Caco-2 (cell line): ENCODE measurements at regions of chr3 and their contacts with region 1.

Region 1: DNA sequence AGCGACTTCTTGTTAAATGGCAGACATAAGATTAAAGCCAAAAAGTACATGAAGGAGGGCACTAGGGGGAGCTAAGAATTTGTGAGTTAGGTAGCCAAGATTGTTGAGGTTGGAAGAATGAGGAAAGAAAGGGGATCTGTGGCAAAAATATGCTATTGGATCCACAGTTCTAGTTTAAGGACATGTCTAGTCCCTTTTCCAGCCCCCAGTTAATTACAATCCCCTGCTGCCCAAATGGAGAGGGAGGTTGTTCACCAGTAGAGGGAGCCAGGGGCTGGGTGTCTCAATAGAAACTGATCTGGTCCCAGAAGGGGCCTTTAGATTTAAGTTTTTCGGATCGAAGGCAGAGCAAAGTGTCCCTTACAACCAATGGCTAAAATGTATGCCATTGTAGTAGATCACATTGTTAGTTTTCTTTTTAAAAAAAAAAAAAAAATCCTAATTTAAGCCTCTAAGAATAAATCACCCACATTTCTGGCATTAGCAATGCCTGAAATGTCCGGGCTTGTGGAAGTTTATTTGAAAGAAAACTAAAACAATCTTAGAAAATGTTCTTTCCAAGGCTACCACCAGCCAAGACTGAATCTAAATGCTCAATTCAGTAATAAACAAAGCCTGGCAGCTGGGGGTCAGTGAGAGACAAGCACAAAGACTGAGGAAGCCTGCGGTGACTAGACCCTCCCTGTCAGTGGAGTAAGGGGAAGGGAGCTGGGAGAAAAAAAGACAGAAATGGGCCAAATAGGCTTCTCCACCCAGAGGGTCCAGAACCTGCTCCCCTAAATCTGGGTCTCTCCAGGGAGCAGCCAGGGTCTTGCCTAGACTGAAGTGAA is 7.1 kb downstream of the COL8A1 start:
- DNase-seq: peak in 1 of 2 experiments; percentile 32
- H3K4me3 ChIP-seq: no peak overlapping the region
- H3K4me3 Mint-ChIP-seq: no peak overlapping the region
- H3K27ac Mint-ChIP-seq: no peak overlapping the region
- H3K4me1 ChIP-seq: peaks cover 14% of the 10 kb centered on the region; the same call in 1 of the 2 replicates
- H3K4me1 Mint-ChIP-seq: peaks cover 10% of the 10 kb centered on the region
- H3K27me3 ChIP-seq: no peaks in the 10 kb centered on the region; the same call in 1 of the 2 replicates
- H3K27me3 Mint-ChIP-seq: peaks cover 13% of the 10 kb centered on the region
- CTCF ChIP-seq: peak; percentile 46 to 56

Region 2: GRCh38 chr3:98827221-98827920 is 818.1 kb before region 1 on chr3:
- CTCF ChIA-PET with region 1: no interaction called
- POLR2A ChIA-PET with region 1: no interaction called
- intact Hi-C with region 1: no loop called
- DNase-seq: peak; percentile 9 to 30
- H3K4me3 ChIP-seq: no peak overlapping the region
- H3K4me3 Mint-ChIP-seq: no peak overlapping the region
- H3K27ac Mint-ChIP-seq: peak overlapping the region; percentile 29
- H3K4me1 ChIP-seq: peaks cover 17% of the 10 kb centered on the region
- H3K4me1 Mint-ChIP-seq: peaks cover 11% of the 10 kb centered on the region
- H3K27me3 ChIP-seq: no peaks in the 10 kb centered on the region
- H3K27me3 Mint-ChIP-seq: no peaks in the 10 kb centered on the region
- CTCF ChIP-seq: no peak

Region 3: GRCh38 chr3:99499235-99500158 is 146.0 kb before region 1 on chr3:
- CTCF ChIA-PET with region 1: no interaction called
- POLR2A ChIA-PET with region 1: no interaction called
- intact Hi-C with region 1: no loop called
- DNase-seq: peak in 1 of 2 experiments; percentile 50
- H3K4me3 ChIP-seq: no peak overlapping the region
- H3K4me3 Mint-ChIP-seq: no peak overlapping the region
- H3K27ac Mint-ChIP-seq: no peak overlapping the region
- H3K4me1 ChIP-seq: no peaks in the 10 kb centered on the region
- H3K4me1 Mint-ChIP-seq: no peaks in the 10 kb centered on the region
- H3K27me3 ChIP-seq: no peaks in the 10 kb centered on the region
- H3K27me3 Mint-ChIP-seq: no peaks in the 10 kb centered on the region
- CTCF ChIP-seq: peak; percentile 51 to 86

Region 4: DNA sequence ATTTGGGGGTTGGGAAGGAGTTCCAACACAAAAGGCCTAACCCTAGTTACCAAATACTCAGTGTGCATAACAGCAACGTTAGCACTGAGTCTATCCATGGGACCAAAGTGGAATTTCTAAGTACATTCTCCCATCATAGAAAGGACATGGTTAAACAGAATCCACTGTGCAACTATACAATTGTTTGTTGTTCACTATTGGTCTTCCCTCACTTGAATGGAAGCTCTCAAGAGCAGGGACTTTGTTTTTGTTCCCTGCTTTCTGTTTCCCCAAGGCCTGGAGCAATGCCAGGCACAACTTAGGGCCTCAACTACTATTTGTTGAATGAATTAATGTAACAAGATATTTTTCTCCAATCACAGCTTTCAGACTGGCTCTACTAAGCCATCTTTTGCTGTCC is 18.5 kb after region 1 on chr3:
- CTCF ChIA-PET with region 1: no interaction called
- POLR2A ChIA-PET with region 1: no interaction called
- intact Hi-C with region 1: no loop called
- DNase-seq: no peak
- H3K4me3 ChIP-seq: no peak overlapping the region
- H3K4me3 Mint-ChIP-seq: no peak overlapping the region
- H3K27ac Mint-ChIP-seq: no peak overlapping the region
- H3K4me1 ChIP-seq: no peaks in the 10 kb centered on the region
- H3K4me1 Mint-ChIP-seq: no peaks in the 10 kb centered on the region
- H3K27me3 ChIP-seq: no peaks in the 10 kb centered on the region; the same call in 1 of the 2 replicates
- H3K27me3 Mint-ChIP-seq: peaks cover 4% of the 10 kb centered on the region
- CTCF ChIP-seq: no peak

Region 5: DNA sequence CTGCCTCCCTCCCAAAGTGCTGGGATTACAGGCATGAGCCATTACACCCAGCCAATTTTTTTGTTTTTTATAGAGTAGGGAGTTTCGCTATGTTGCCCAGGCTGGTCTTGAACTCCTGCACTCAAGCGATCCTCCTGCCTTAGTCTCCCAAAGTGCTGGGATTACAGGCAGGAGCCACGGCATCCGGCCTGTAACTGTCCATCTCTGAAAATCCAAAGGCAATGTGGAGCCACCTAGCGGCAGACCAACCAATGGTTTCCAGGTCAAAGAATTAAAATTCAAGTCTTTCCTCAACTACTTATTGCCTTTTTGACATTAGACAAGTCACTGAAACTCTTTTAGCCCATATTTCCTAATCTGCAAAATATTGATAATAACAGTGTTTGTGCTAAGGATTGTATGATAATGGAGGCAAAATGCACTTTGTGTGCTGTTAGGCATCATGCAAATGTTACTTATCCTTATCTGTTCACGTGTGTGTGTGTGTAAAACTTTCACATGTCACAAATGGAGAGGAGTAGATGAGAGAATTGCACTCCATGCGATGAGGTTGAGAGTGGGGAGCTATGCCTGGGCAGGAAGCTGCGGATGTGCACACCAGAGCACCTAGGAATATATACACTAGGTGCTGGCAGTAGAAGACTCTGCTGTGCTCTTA is 41.6 kb after region 1 on chr3:
- CTCF ChIA-PET with region 1: interaction called, 3 read pairs
- POLR2A ChIA-PET with region 1: no interaction called
- intact Hi-C with region 1: loop called (anchors 1 kb)
- DNase-seq: peak; percentile 56 to 65
- H3K4me3 ChIP-seq: no peak overlapping the region
- H3K4me3 Mint-ChIP-seq: no peak overlapping the region
- H3K27ac Mint-ChIP-seq: no peak overlapping the region
- H3K4me1 ChIP-seq: no peaks in the 10 kb centered on the region
- H3K4me1 Mint-ChIP-seq: no peaks in the 10 kb centered on the region
- H3K27me3 ChIP-seq: no peaks in the 10 kb centered on the region; the same call in 1 of the 2 replicates
- H3K27me3 Mint-ChIP-seq: peaks cover 2% of the 10 kb centered on the region
- CTCF ChIP-seq: peak; percentile 54 to 72

Region 6: GRCh38 chr3:99753268-99753975 is 107.9 kb after region 1 on chr3:
- CTCF ChIA-PET with region 1: no interaction called
- POLR2A ChIA-PET with region 1: no interaction called
- intact Hi-C with region 1: loop called (anchors 1 kb)
- DNase-seq: peak in 1 of 2 experiments; percentile 41
- H3K4me3 ChIP-seq: no peak overlapping the region
- H3K4me3 Mint-ChIP-seq: no peak overlapping the region
- H3K27ac Mint-ChIP-seq: no peak overlapping the region
- H3K4me1 ChIP-seq: no peaks in the 10 kb centered on the region
- H3K4me1 Mint-ChIP-seq: no peaks in the 10 kb centered on the region
- H3K27me3 ChIP-seq: no peaks in the 10 kb centered on the region; the same call in 1 of the 2 replicates
- H3K27me3 Mint-ChIP-seq: peaks cover 13% of the 10 kb centered on the region
- CTCF ChIP-seq: peak; percentile 68

Region 7: DNA sequence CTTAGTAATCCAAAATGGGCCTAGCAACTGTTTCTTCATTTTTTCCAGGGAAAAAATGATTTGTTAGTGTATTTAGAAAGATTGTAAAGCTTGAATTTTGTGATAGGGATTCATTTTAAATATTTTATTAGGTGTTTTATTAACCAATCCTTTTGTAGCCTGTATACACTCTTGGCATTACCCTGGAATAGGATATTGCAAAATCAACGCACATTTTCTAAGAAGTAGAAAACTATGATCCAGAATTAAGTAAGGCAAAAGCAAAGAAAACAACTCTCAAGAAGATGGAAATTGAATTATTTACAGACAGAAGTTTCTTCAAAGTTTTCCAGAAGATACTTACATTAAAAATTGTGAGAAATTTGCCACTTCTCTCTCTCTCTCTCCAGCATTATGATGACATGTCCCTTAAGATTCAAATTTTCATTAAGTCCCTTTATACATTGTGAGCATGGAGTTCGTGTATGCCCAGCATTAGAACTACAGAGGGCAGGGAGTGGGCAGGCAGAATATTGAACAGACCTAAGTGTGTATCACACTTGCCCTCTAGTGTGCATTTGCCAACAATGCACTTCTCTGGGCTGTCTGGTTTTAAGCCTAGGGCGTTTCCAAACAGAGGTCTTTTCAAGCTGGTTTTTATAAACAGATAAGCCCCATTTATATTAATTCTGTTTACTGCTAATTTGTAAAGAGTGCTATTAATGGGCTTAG is 143.7 kb after region 1 on chr3:
- CTCF ChIA-PET with region 1: no interaction called
- POLR2A ChIA-PET with region 1: no interaction called
- intact Hi-C with region 1: loop called (anchors 1 kb)
- DNase-seq: peak in 1 of 2 experiments; percentile 35
- H3K4me3 ChIP-seq: no peak overlapping the region
- H3K4me3 Mint-ChIP-seq: no peak overlapping the region
- H3K27ac Mint-ChIP-seq: no peak overlapping the region
- H3K4me1 ChIP-seq: no peaks in the 10 kb centered on the region
- H3K4me1 Mint-ChIP-seq: no peaks in the 10 kb centered on the region
- H3K27me3 ChIP-seq: no peaks in the 10 kb centered on the region
- H3K27me3 Mint-ChIP-seq: peaks cover 16% of the 10 kb centered on the region
- CTCF ChIP-seq: peak; percentile 53 to 72